Mammary epithelial cell (primary cell): ENCODE measurements at regions of chr22 and their contacts with region 1.

Region 1: GRCh38 chr22:26756675-26757293 is 99.4 kb downstream of the MIAT start:
- DNase-seq: peak; percentile 36
- H3K4me3 ChIP-seq: peak overlapping the region in 1 of 3 experiments; percentile 36
- H3K27ac ChIP-seq: no peak overlapping the region
- H3K4me1 ChIP-seq: peaks cover 3% of the 10 kb centered on the region
- H3K27me3 ChIP-seq: no peaks in the 10 kb centered on the region
- CTCF ChIP-seq: peak; percentile 48 to 72

Region 2: GRCh38 chr22:27331526-27332281 is 574.9 kb after region 1 on chr22:
- CTCF ChIA-PET with region 1: no interaction called
- dilution Hi-C with region 1: no loop called
- in situ Hi-C with region 1: no loop called
- intact Hi-C with region 1: loop called (anchors 1 kb)
- DNase-seq: no peak
- H3K4me3 ChIP-seq: no peak overlapping the region
- H3K27ac ChIP-seq: no peak overlapping the region
- H3K4me1 ChIP-seq: peaks cover 6% of the 10 kb centered on the region
- H3K27me3 ChIP-seq: no peaks in the 10 kb centered on the region
- CTCF ChIP-seq: peak; percentile 41 to 43

Region 3: DNA sequence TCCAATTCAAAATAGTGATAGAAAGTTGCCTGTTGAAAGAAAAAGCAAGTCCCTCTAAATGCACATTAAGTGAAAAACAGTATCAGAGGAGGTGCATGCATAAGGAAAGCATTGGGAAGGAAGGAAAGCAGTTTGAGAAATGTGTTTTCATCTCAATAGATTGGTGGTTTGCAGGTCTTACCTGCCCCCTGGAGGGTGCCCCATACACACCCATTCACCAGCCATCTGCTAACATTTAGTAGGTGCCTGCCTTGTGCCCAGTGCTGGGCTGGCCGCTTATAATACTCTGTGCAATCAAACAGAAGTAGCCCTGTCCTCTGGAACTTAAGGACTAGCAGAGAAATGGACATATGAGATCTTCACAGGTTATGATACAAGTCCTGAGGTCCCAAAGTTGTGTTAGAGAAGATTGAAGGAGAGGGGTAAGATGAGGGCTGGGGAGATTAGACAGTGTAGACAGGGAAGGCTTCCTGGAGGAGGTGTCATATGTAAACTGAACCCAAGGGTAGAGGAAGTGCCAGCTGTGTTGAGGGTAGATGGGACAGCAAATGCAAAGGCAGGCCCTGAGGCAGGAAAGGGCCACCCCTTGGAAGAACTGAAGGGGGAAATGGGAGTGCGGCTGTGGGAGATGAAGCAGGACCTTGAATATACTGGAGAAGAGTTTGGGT is 860.6 kb after region 1 on chr22:
- CTCF ChIA-PET with region 1: no interaction called
- dilution Hi-C with region 1: no loop called
- in situ Hi-C with region 1: no loop called
- intact Hi-C with region 1: loop called (anchors 10 kb)
- DNase-seq: no peak
- H3K4me3 ChIP-seq: no peak overlapping the region
- H3K27ac ChIP-seq: no peak overlapping the region
- H3K4me1 ChIP-seq: peaks cover 7% of the 10 kb centered on the region
- H3K27me3 ChIP-seq: no peaks in the 10 kb centered on the region
- CTCF ChIP-seq: peak; percentile 25 to 35

Region 4: GRCh38 chr22:28009272-28009827 is 1252.6 kb after region 1 on chr22:
- CTCF ChIA-PET with region 1: no interaction called
- dilution Hi-C with region 1: no loop called
- in situ Hi-C with region 1: loop called in 1 of 2 experiments (anchors 25 kb)
- intact Hi-C with region 1: loop called (anchors 2 kb)
- DNase-seq: peak; percentile 54
- H3K4me3 ChIP-seq: no peak overlapping the region
- H3K27ac ChIP-seq: no peak overlapping the region
- H3K4me1 ChIP-seq: peaks cover 3% of the 10 kb centered on the region
- H3K27me3 ChIP-seq: no peaks in the 10 kb centered on the region
- CTCF ChIP-seq: peak; percentile 93 to 98